ENCODE measurements at regions of chr3 and their contacts with region 1.

Region 1: GRCh38 chr3:165854696-165855095 is 17.5 kb upstream of the BCHE start:
- DNase-seq: peak; percentile 11
- H3K4me3 ChIP-seq: no peak overlapping the region
- H3K27ac ChIP-seq: no peak overlapping the region
- H3K4me1 ChIP-seq: no peaks in the 10 kb centered on the region; a peak in 1 of 4 replicates
- H3K27me3 ChIP-seq: no peaks in the 10 kb centered on the region
- CTCF ChIP-seq: peak; percentile 75
- EP300 ChIP-seq: no peak
- RAD21 ChIP-seq: peak; percentile 46

Region 2: GRCh38 chr3:165817160-165817709 is 37.5 kb before region 1 on chr3:
- CTCF ChIA-PET with region 1: interaction called, 10 read pairs
- POLR2A ChIA-PET with region 1: no interaction called
- DNase-seq: no peak
- H3K4me3 ChIP-seq: no peak overlapping the region
- H3K27ac ChIP-seq: no peak overlapping the region
- H3K4me1 ChIP-seq: no peaks in the 10 kb centered on the region
- H3K27me3 ChIP-seq: no peaks in the 10 kb centered on the region
- CTCF ChIP-seq: no peak
- EP300 ChIP-seq: no peak
- RAD21 ChIP-seq: no peak

Region 3: DNA sequence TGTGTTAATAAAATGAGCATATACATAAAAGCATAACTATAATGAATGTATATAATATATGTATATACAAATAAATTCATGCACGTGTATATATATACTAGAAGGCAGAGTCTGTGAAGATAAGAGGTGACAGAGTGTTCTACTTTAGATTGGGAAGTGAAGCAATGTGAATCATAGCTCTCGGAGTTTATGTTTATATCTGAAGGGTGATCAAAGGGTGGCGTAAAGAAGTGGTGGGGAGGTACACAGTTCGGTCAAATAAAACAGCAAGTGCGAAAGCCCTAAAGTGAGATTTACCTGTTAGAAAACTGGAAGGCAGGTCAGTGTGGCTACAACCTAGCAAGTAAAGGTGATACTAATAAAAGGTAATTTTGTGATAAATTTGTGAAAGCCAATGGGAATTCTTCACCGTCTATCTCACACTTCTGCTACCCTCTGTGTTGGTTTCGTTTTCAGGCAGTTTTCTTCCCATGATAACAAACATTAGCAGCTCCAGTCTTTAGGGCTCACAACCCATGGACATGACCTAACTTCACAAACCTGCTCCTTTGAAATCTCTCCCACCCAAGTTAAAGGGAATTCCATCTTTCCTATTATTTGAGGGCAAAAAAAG is 29.3 kb after region 1 on chr3:
- CTCF ChIA-PET with region 1: interaction called, 10 read pairs
- POLR2A ChIA-PET with region 1: no interaction called
- DNase-seq: no peak
- H3K4me3 ChIP-seq: peak overlapping the region; percentile 46 to 59
- H3K27ac ChIP-seq: no peak overlapping the region
- H3K4me1 ChIP-seq: no peaks in the 10 kb centered on the region
- H3K27me3 ChIP-seq: no peaks in the 10 kb centered on the region
- CTCF ChIP-seq: no peak
- EP300 ChIP-seq: no peak
- RAD21 ChIP-seq: no peak

Region 4: GRCh38 chr3:166013073-166013679 is 158.5 kb after region 1 on chr3:
- CTCF ChIA-PET with region 1: no interaction called
- POLR2A ChIA-PET with region 1: no interaction called
- DNase-seq: peak; percentile 1
- H3K4me3 ChIP-seq: no peak overlapping the region
- H3K27ac ChIP-seq: no peak overlapping the region
- H3K4me1 ChIP-seq: no peaks in the 10 kb centered on the region
- H3K27me3 ChIP-seq: no peaks in the 10 kb centered on the region
- CTCF ChIP-seq: peak; percentile 71
- EP300 ChIP-seq: no peak
- RAD21 ChIP-seq: peak; percentile 52

Measured in SK-N-SH (cell line).